ENCODE measurements at regions of chr2 and their contacts with region 1.

Region 1: DNA sequence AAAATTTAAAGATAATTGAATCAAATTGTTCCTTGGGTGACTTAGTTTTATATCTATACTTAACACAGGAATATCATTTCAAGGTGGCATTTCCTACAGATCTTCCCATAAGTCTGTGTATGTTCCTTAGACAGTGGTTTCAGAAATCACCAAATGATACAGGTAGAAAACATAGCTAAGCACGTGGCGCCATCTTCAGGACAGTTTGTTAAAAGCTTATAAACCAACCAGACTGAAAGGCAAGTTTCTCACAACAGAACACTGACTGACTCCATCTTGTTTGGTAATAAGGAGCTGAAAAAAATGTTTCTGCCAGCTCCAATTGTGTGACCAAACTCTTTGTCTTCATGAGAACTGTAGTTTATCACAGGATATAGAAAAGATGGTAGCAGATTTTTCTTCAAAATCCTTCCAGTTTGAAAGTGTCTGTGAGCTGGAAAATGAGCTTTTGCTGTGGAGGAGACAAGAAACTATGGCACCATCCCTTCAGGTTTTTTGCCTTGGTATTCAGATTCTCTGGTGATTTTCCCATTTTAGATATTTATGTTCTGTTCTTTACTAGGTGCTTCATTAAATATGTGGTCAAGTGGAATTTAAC is 34.8 kb upstream of the NEUROD1 start:
- DNase-seq: peak; percentile 85
- ATAC-seq: peak; percentile 93
- H3K4me3 ChIP-seq: no peak overlapping the region
- H3K27ac ChIP-seq: no peak overlapping the region
- H3K4me1 ChIP-seq: no peaks in the 10 kb centered on the region; a peak in 1 of 4 replicates
- H3K27me3 ChIP-seq: no peaks in the 10 kb centered on the region
- CTCF ChIP-seq: peak; percentile 56 to 84 (median 77)
- POLR2A ChIP-seq: no peak
- RAD21 ChIP-seq: peak; percentile 96

Region 2: GRCh38 chr2:181077128-181077709 is 637.9 kb before region 1 on chr2:
- CTCF ChIA-PET with region 1: interaction called, 6 read pairs
- POLR2A ChIA-PET with region 1: no interaction called
- RAD21 ChIA-PET with region 1: no interaction called
- intact Hi-C with region 1: loop called (anchors 2 kb)
- DNase-seq: peak; percentile 22
- ATAC-seq: peak; percentile 84
- H3K4me3 ChIP-seq: no peak overlapping the region
- H3K27ac ChIP-seq: no peak overlapping the region
- H3K4me1 ChIP-seq: no peaks in the 10 kb centered on the region
- H3K27me3 ChIP-seq: no peaks in the 10 kb centered on the region
- CTCF ChIP-seq: peak; percentile 42 to 77 (median 63); a peak in 5 of 6 replicates
- POLR2A ChIP-seq: no peak
- RAD21 ChIP-seq: peak; percentile 73

Region 3: GRCh38 chr2:181178823-181179412 is 536.2 kb before region 1 on chr2:
- CTCF ChIA-PET with region 1: no interaction called
- POLR2A ChIA-PET with region 1: no interaction called
- RAD21 ChIA-PET with region 1: no interaction called
- intact Hi-C with region 1: no loop called
- DNase-seq: peak; percentile 27
- ATAC-seq: peak; percentile 77
- H3K4me3 ChIP-seq: no peak overlapping the region
- H3K27ac ChIP-seq: no peak overlapping the region
- H3K4me1 ChIP-seq: no peaks in the 10 kb centered on the region
- H3K27me3 ChIP-seq: no peaks in the 10 kb centered on the region
- CTCF ChIP-seq: peak; percentile 18 to 67 (median 63); a peak in 5 of 6 replicates
- POLR2A ChIP-seq: no peak
- RAD21 ChIP-seq: peak; percentile 50

Region 4: GRCh38 chr2:181431674-181432073 is 283.5 kb before region 1 on chr2:
- CTCF ChIA-PET with region 1: interaction called, 11 read pairs
- POLR2A ChIA-PET with region 1: no interaction called
- RAD21 ChIA-PET with region 1: no interaction called
- intact Hi-C with region 1: no loop called
- DNase-seq: no peak
- ATAC-seq: no peak
- H3K4me3 ChIP-seq: no peak overlapping the region
- H3K27ac ChIP-seq: no peak overlapping the region
- H3K4me1 ChIP-seq: no peaks in the 10 kb centered on the region
- H3K27me3 ChIP-seq: no peaks in the 10 kb centered on the region
- CTCF ChIP-seq: peak in 2 of 3 experiments; percentile 4 to 10; a peak in 1 of 6 replicates
- POLR2A ChIP-seq: no peak
- RAD21 ChIP-seq: no peak

Region 5: GRCh38 chr2:181466661-181467576 is 248.2 kb before region 1 on chr2:
- CTCF ChIA-PET with region 1: interaction called, 9 read pairs
- POLR2A ChIA-PET with region 1: no interaction called
- RAD21 ChIA-PET with region 1: no interaction called
- intact Hi-C with region 1: loop called (anchors 2 kb)
- DNase-seq: peak; percentile 57
- ATAC-seq: peak; percentile 72
- H3K4me3 ChIP-seq: no peak overlapping the region
- H3K27ac ChIP-seq: no peak overlapping the region
- H3K4me1 ChIP-seq: no peaks in the 10 kb centered on the region
- H3K27me3 ChIP-seq: no peaks in the 10 kb centered on the region
- CTCF ChIP-seq: peak; percentile 53 to 82 (median 77); a peak in 5 of 6 replicates
- POLR2A ChIP-seq: no peak
- RAD21 ChIP-seq: peak; percentile 72

Region 6: DNA sequence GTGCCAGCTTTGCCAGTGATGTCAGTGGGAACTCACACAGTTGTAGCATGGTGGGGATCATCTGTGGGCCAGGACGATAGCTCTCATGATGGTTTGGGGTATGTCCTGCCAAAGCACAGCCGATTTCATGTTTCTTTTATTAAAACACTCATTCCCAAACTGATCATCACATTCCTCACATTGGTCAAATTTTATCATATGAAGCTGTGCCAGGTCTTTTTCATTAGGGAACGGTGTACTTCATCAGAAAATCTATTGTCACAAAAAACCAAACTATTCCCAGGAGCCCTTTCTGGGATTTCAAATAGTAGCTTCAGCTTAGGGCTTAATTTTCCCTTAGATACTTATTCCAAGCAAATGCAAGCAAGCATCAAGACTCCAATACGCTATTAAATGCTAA is 215.9 kb before region 1 on chr2:
- CTCF ChIA-PET with region 1: no interaction called
- POLR2A ChIA-PET with region 1: no interaction called
- RAD21 ChIA-PET with region 1: no interaction called
- intact Hi-C with region 1: no loop called
- DNase-seq: no peak
- ATAC-seq: no peak
- H3K4me3 ChIP-seq: no peak overlapping the region
- H3K27ac ChIP-seq: no peak overlapping the region
- H3K4me1 ChIP-seq: no peaks in the 10 kb centered on the region
- H3K27me3 ChIP-seq: no peaks in the 10 kb centered on the region
- CTCF ChIP-seq: no peak
- POLR2A ChIP-seq: no peak
- RAD21 ChIP-seq: no peak

Region 7: DNA sequence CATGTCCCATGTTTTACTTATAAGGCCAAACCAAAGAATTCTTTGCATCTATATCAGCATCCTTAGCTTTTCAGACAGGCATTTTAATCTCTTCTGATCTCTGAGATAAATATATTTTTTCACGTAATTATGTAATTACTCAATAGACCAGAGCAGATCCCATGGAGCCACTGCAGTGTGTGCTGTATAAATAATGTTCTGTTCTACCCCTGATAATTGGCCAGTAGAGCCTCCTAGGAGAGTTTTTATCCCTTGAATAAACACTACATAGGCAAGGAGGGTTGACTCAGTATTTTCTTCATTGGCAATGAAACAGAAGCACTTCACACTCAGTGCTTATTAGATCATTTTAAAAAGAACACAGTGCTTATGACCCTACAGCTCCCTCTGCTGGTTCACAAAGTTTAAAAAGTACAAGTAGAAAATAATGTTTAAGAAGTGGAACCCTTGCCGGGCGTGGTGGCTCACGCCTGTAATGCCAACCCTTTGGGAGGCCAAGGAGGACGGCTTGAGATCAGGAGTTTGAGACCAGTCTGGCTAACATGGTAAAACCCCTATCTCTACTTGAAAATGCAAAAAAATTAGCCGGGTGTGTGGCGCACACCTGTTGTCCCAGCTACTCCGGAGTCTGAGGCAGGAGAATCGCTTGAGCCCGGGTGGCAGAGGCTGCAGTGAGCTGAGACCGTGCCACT is 362.5 kb after region 1 on chr2:
- CTCF ChIA-PET with region 1: interaction called, 13 read pairs
- POLR2A ChIA-PET with region 1: no interaction called
- RAD21 ChIA-PET with region 1: interaction called in 1 of 2 experiments, 4 read pairs
- intact Hi-C with region 1: no loop called
- DNase-seq: peak; percentile 81
- ATAC-seq: peak; percentile 85
- H3K4me3 ChIP-seq: no peak overlapping the region
- H3K27ac ChIP-seq: peak overlapping the region; percentile 26; the same call in 1 of the 2 replicates
- H3K4me1 ChIP-seq: peaks cover 12% of the 10 kb centered on the region in 2 experiments
- H3K27me3 ChIP-seq: no peaks in the 10 kb centered on the region
- CTCF ChIP-seq: peak; percentile 59 to 77 (median 75); a peak in 5 of 6 replicates
- POLR2A ChIP-seq: no peak
- RAD21 ChIP-seq: peak; percentile 94

Measured in HCT116 (cell line).